K562 (cell line): ENCODE measurements at regions of chr3 and their contacts with region 1.

Region 1: GRCh38 chr3:195716865-195717210 is 3.9 kb upstream of the MUC20 start:
- DNase-seq: no peak
- ATAC-seq: no peak
- H3K4me3 ChIP-seq: no peak overlapping the region
- H3K27ac ChIP-seq: no peak overlapping the region
- H3K4me1 ChIP-seq: peaks cover 0 to 5% of the 10 kb centered on the region in 2 experiments; a peak in 3 of 5 replicates
- H3K27me3 ChIP-seq: peaks cover 30 to 35% of the 10 kb centered on the region in 2 experiments
- CTCF ChIP-seq: no peak
- EP300 ChIP-seq: no peak
- POLR2A ChIP-seq: no peak
- RAD21 ChIP-seq: no peak

Region 2: DNA sequence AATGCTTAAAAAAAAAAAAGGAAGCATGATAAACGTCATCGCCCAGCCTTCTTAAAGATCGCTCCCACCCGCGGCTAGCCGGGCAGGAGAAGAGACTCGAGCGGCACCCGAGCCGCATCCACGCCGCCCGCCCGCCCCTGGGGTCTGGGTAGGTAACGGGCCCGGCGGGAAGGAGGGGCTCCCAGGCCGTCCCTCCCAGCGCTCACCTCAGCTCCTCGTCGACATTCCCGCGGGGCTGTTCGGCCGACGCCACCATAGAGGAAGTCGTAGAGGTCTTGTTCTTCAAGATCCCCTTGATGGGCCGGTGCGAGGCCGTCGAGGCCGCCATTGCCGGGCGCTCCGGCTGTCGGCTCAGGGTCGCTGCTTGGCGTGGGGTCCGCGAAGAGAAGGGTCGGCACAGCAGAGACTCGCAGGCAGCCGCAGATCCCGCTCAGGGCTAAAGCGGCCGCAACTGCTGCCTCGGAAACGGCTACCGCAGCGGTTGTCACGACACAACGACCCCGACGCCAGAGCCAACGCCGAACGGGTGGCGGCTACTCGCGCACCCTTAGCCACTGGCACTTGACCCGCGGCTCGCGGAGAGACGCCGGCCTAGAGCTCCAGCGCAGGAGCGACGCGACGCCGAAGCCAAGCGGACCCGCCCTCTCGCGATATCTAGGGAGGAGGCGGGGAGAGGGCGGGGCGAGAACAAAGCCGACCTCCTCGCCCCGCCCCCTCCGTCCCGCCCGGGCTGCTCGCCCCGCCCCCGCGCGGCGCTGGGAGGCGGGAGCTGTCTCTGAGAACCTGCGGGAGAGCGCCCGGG is 173.9 kb before region 1 on chr3 and contains the start of gene PPP1R2:
- CTCF ChIA-PET with region 1: no interaction called
- POLR2A ChIA-PET with region 1: interaction called, 4 read pairs
- in situ Hi-C with region 1: no loop called
- intact Hi-C with region 1: loop called (anchors 10 kb)
- DNase-seq: peak; percentile 94 to 99 (median 97)
- ATAC-seq: peak; percentile 93
- H3K4me3 ChIP-seq: peak within 1 kb of the TSS; percentile 62
- H3K27ac ChIP-seq: peak within 1 kb of the TSS; percentile 86
- H3K4me1 ChIP-seq: peaks cover 17 to 30% of the 10 kb centered on the region in 2 experiments
- H3K27me3 ChIP-seq: no peaks in the 10 kb centered on the region
- CTCF ChIP-seq: no peak
- EP300 ChIP-seq: no peak
- POLR2A ChIP-seq: peak; percentile 95
- RAD21 ChIP-seq: no peak
- polyA plus RNA-seq, gene PPP1R2: 9.4 to 10.5 TPM

Region 3: GRCh38 chr3:195612075-195612800 is 104.6 kb before region 1 on chr3:
- CTCF ChIA-PET with region 1: no interaction called
- POLR2A ChIA-PET with region 1: no interaction called
- in situ Hi-C with region 1: loop called (anchors 5 kb)
- intact Hi-C with region 1: no loop called
- DNase-seq: peak in 1 of 4 experiments; percentile 14
- ATAC-seq: no peak
- H3K4me3 ChIP-seq: no peak overlapping the region
- H3K27ac ChIP-seq: no peak overlapping the region
- H3K4me1 ChIP-seq: no peaks in the 10 kb centered on the region; a peak in 1 of 5 replicates
- H3K27me3 ChIP-seq: peaks cover 5 to 20% of the 10 kb centered on the region in 2 experiments; a peak in 3 of 5 replicates
- CTCF ChIP-seq: no peak
- EP300 ChIP-seq: no peak
- POLR2A ChIP-seq: no peak
- RAD21 ChIP-seq: no peak

Region 4: GRCh38 chr3:195705081-195705991 is 11.5 kb before region 1 on chr3:
- CTCF ChIA-PET with region 1: interaction called, 7 read pairs
- POLR2A ChIA-PET with region 1: interaction called, 24 read pairs
- in situ Hi-C with region 1: no loop called
- intact Hi-C with region 1: no loop called
- DNase-seq: peak in 3 of 4 experiments; percentile 16 to 28 (median 25)
- ATAC-seq: peak; percentile 42
- H3K4me3 ChIP-seq: no peak overlapping the region
- H3K27ac ChIP-seq: no peak overlapping the region
- H3K4me1 ChIP-seq: peaks cover 4% of the 10 kb centered on the region in 2 experiments; a peak in 3 of 5 replicates
- H3K27me3 ChIP-seq: peaks cover 0 to 7% of the 10 kb centered on the region in 2 experiments; a peak in 1 of 5 replicates
- CTCF ChIP-seq: no peak
- EP300 ChIP-seq: no peak
- POLR2A ChIP-seq: no peak; the same call in 1 of the 2 replicates
- RAD21 ChIP-seq: no peak

Region 5: GRCh38 chr3:196159952-196160804 is 443.3 kb after region 1 on chr3:
- CTCF ChIA-PET with region 1: no interaction called
- POLR2A ChIA-PET with region 1: no interaction called
- in situ Hi-C with region 1: no loop called
- intact Hi-C with region 1: no loop called
- DNase-seq: peak; percentile 61 to 78 (median 68)
- ATAC-seq: peak; percentile 93
- H3K4me3 ChIP-seq: no peak overlapping the region
- H3K27ac ChIP-seq: peak overlapping the region; percentile 69
- H3K4me1 ChIP-seq: peaks cover 29 to 30% of the 10 kb centered on the region in 2 experiments
- H3K27me3 ChIP-seq: no peaks in the 10 kb centered on the region
- CTCF ChIP-seq: no peak
- EP300 ChIP-seq: no peak
- POLR2A ChIP-seq: no peak
- RAD21 ChIP-seq: no peak

Region 6: GRCh38 chr3:196192036-196192523 is 475.2 kb after region 1 on chr3:
- CTCF ChIA-PET with region 1: no interaction called
- POLR2A ChIA-PET with region 1: no interaction called
- in situ Hi-C with region 1: no loop called
- intact Hi-C with region 1: loop called (anchors 10 kb)
- DNase-seq: peak in 1 of 4 experiments; percentile 34
- ATAC-seq: no peak
- H3K4me3 ChIP-seq: no peak overlapping the region
- H3K27ac ChIP-seq: peak overlapping the region; percentile 62; the same call in 2 of the 3 replicates
- H3K4me1 ChIP-seq: peaks cover 46 to 83% of the 10 kb centered on the region in 2 experiments
- H3K27me3 ChIP-seq: no peaks in the 10 kb centered on the region
- CTCF ChIP-seq: no peak
- EP300 ChIP-seq: no peak
- POLR2A ChIP-seq: no peak
- RAD21 ChIP-seq: peak in 1 of 2 experiments; percentile 24; a peak in 1 of 4 replicates

Region 7: GRCh38 chr3:196219194-196219978 is 502.5 kb after region 1 on chr3:
- CTCF ChIA-PET with region 1: no interaction called
- POLR2A ChIA-PET with region 1: no interaction called
- in situ Hi-C with region 1: loop called (anchors 25 kb)
- intact Hi-C with region 1: no loop called
- DNase-seq: no peak
- ATAC-seq: peak; percentile 42
- H3K4me3 ChIP-seq: no peak overlapping the region
- H3K27ac ChIP-seq: no peak overlapping the region
- H3K4me1 ChIP-seq: peaks cover 5 to 31% of the 10 kb centered on the region in 2 experiments; a peak in 4 of 5 replicates
- H3K27me3 ChIP-seq: no peaks in the 10 kb centered on the region
- CTCF ChIP-seq: no peak
- EP300 ChIP-seq: no peak
- POLR2A ChIP-seq: no peak
- RAD21 ChIP-seq: no peak

Region 8: GRCh38 chr3:196502775-196503195 is 785.9 kb after region 1 on chr3:
- CTCF ChIA-PET with region 1: no interaction called
- POLR2A ChIA-PET with region 1: no interaction called
- in situ Hi-C with region 1: loop called (anchors 25 kb)
- intact Hi-C with region 1: no loop called
- DNase-seq: peak; percentile 20 to 62 (median 26)
- ATAC-seq: peak; percentile 33
- H3K4me3 ChIP-seq: peak overlapping the region; percentile 91
- H3K27ac ChIP-seq: peak overlapping the region; percentile 93
- H3K4me1 ChIP-seq: peaks cover 10 to 14% of the 10 kb centered on the region in 2 experiments; a peak in 4 of 5 replicates
- H3K27me3 ChIP-seq: no peaks in the 10 kb centered on the region
- CTCF ChIP-seq: 0 out of 6 replicates have a peak, but pooled peaks of 1 of the 3 experiments have one; percentile 23
- EP300 ChIP-seq: no peak
- POLR2A ChIP-seq: no peak
- RAD21 ChIP-seq: no peak